ENCODE measurements at regions of chr22 and their contacts with region 1.

Region 1: DNA sequence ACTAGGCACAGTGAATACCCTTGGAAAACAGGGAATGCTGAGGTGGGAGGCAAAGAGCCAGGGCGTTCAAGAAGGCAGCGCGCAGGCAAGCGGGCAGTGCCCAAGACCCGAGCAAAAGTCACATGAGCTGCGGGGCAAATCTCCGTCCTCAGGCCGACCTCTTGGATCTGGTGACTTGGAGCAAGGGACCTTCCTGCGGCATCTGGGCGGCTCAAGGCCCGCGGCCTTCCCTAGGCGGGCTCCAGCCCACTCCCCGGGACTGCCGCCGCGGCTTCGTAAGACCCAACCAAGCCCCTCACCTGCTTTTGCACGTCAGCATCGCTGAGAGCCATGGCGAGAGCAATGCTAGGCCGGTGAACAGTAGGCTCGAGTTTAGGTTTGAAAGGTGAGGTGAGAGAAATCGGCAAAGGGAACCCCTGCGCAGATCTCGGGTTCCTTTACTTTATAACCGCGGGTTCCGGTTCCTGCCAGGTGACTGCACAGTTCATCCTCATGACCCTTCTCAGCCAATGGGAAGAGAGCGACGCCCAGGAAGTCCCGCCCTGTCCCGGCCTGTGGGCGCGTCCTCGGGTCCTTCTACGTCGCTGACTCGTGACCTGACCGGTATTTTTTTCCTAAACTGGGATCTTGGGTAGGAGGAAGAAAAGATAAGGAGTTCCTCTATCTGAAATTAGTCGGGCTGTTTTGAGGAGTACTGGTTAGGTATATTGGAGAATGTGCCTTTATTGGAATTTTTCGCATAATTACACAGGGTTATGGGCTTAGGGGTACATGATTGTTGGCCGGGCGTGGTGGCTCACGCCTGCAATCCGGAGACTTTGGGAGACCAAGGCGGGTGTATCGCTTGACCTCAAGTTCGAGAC is at the start of gene ATP6V1E1:
- DNase-seq: peak; percentile 88
- ATAC-seq: peak; percentile 100
- H3K4me3 ChIP-seq: peak within 1 kb of the TSS; percentile 98
- H3K27ac ChIP-seq: peak within 1 kb of the TSS; percentile 76
- H3K4me1 ChIP-seq: no peaks in the 10 kb centered on the region
- H3K27me3 ChIP-seq: no peaks in the 10 kb centered on the region
- CTCF ChIP-seq: no peak
- EP300 ChIP-seq: no peak
- POLR2A ChIP-seq: peak; percentile 78
- RAD21 ChIP-seq: no peak
- polyA plus RNA-seq, gene ATP6V1E1: 90.9 to 115 TPM

Region 2: GRCh38 chr22:17773606-17774205 is 145.2 kb after region 1 on chr22:
- CTCF ChIA-PET with region 1: no interaction called
- POLR2A ChIA-PET with region 1: interaction called, 4 read pairs
- RAD21 ChIA-PET with region 1: no interaction called
- SMC1A ChIA-PET with region 1: no interaction called
- in situ Hi-C with region 1: no loop called
- intact Hi-C with region 1: loop called (anchors 5 kb)
- DNase-seq: no peak
- ATAC-seq: peak; percentile 49
- H3K4me3 ChIP-seq: peak overlapping the region; percentile 83
- H3K27ac ChIP-seq: peak overlapping the region; percentile 69
- H3K4me1 ChIP-seq: peaks cover 46% of the 10 kb centered on the region
- H3K27me3 ChIP-seq: no peaks in the 10 kb centered on the region
- CTCF ChIP-seq: no peak
- EP300 ChIP-seq: no peak
- POLR2A ChIP-seq: no peak; the same call in none of the 2 replicates
- RAD21 ChIP-seq: no peak

Region 3: GRCh38 chr22:19447388-19448075 is 1819.0 kb after region 1 on chr22 and contains the start of gene C22orf39:
- CTCF ChIA-PET with region 1: no interaction called
- POLR2A ChIA-PET with region 1: no interaction called
- RAD21 ChIA-PET with region 1: no interaction called
- SMC1A ChIA-PET with region 1: no interaction called
- in situ Hi-C with region 1: loop called (anchors 25 kb)
- intact Hi-C with region 1: no loop called
- DNase-seq: peak; percentile 67
- ATAC-seq: peak; percentile 92
- H3K4me3 ChIP-seq: peak within 1 kb of the TSS; percentile 95
- H3K27ac ChIP-seq: peak within 1 kb of the TSS; percentile 85
- H3K4me1 ChIP-seq: peaks cover 17% of the 10 kb centered on the region
- H3K27me3 ChIP-seq: no peaks in the 10 kb centered on the region
- CTCF ChIP-seq: no peak
- EP300 ChIP-seq: no peak
- POLR2A ChIP-seq: peak; percentile 92
- RAD21 ChIP-seq: no peak
- polyA plus RNA-seq, gene C22orf39: 6.7 to 10.9 TPM

Measured in GM12878 (cell line).